A673 (cell line): ENCODE measurements at regions of chr12 and their contacts with region 1.

Region 1: GRCh38 chr12:2017546-2018337 is 13.5 kb upstream of the DCP1B start:
- DNase-seq: peak; percentile 26
- H3K4me3 ChIP-seq: no peak overlapping the region
- H3K27ac ChIP-seq: no peak overlapping the region
- H3K4me1 ChIP-seq: no peaks in the 10 kb centered on the region
- H3K27me3 ChIP-seq: no peaks in the 10 kb centered on the region
- CTCF ChIP-seq: no peak

Region 2: GRCh38 chr12:2652401-2653081 is 634.8 kb after region 1 on chr12:
- CTCF ChIA-PET with region 1: interaction called, 10 read pairs
- POLR2A ChIA-PET with region 1: no interaction called
- intact Hi-C with region 1: no loop called
- DNase-seq: no peak
- H3K4me3 ChIP-seq: no peak overlapping the region
- H3K27ac ChIP-seq: no peak overlapping the region
- H3K4me1 ChIP-seq: no peaks in the 10 kb centered on the region
- H3K27me3 ChIP-seq: no peaks in the 10 kb centered on the region
- CTCF ChIP-seq: no peak